ENCODE measurements at regions of chr12 and their contacts with region 1.

Region 1: DNA sequence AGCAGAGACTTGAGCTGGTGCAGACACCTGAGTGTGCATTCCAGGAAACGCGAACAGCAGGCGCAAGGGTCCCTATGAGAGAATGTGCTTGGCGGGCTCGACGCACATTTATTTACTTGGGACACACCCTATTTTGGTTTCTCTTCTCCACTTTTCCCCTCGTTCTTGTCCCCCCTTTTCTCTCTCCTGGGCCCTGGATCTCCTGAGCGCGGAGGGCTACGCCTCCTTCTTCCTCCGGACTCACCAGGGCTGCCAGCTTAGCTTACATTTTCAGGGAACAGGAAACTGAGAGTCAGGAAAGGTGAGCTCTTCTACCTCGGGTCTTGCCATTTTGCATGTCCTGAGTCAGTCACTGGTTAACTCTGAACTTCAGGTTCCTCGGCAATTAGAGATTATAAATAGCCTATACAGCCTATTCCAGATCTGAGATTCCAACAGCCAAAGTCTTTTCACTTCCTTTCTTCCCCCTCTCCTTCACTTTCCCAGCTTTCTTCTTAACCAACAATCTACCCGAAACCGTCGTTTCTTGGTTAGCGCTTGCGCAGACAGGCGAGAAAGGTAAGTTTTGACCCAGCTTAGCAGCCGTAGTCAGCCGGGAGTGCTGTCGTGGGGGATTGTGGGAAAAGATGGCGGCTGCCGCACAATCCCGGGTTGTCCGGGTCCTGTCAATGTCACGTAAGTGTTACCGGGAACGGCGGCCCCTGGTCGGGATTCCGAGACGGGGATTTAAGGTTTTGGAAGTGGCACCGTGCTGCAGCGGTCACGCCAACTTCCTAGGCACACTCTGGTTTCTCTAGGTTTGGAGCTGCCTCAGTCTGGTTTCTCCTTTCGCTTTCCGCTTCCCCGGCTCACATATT is at the starts of genes AKAP3 and NDUFA9:
- DNase-seq: peak; percentile 68 to 83 (median 70)
- ATAC-seq: peak; percentile 96
- H3K4me3 ChIP-seq: peak within 1 kb of the TSS; percentile 67
- H3K27ac ChIP-seq: peak within 1 kb of the TSS; percentile 86
- H3K4me1 ChIP-seq: no peaks in the 10 kb centered on the region; a peak in 2 of 5 replicates
- H3K27me3 ChIP-seq: no peaks in the 10 kb centered on the region
- CTCF ChIP-seq: no peak
- EP300 ChIP-seq: no peak
- POLR2A ChIP-seq: peak; percentile 90
- RAD21 ChIP-seq: no peak
- polyA plus RNA-seq, gene AKAP3: 0.17 to 0.31 TPM
- polyA plus RNA-seq, gene NDUFA9: 330 to 331 TPM

Region 2: GRCh38 chr12:4540638-4541037 is 108.1 kb before region 1 on chr12:
- CTCF ChIA-PET with region 1: no interaction called
- POLR2A ChIA-PET with region 1: no interaction called
- in situ Hi-C with region 1: no loop called
- intact Hi-C with region 1: loop called (anchors 10 kb)
- DNase-seq: no peak
- ATAC-seq: no peak
- H3K4me3 ChIP-seq: peak overlapping the region; percentile 84; the same call in 1 of the 2 replicates
- H3K27ac ChIP-seq: no peak overlapping the region
- H3K4me1 ChIP-seq: peaks cover 0 to 2% of the 10 kb centered on the region in 2 experiments; a peak in 1 of 5 replicates
- H3K27me3 ChIP-seq: no peaks in the 10 kb centered on the region
- CTCF ChIP-seq: no peak
- EP300 ChIP-seq: no peak
- POLR2A ChIP-seq: no peak
- RAD21 ChIP-seq: no peak

Region 3: GRCh38 chr12:4604684-4605193 is 44.0 kb before region 1 on chr12:
- CTCF ChIA-PET with region 1: no interaction called
- POLR2A ChIA-PET with region 1: interaction called, 3 read pairs
- in situ Hi-C with region 1: no loop called
- intact Hi-C with region 1: loop called (anchors 2 kb)
- DNase-seq: peak; percentile 69 to 83 (median 70)
- ATAC-seq: peak; percentile 97
- H3K4me3 ChIP-seq: peak overlapping the region; percentile 53
- H3K27ac ChIP-seq: no peak overlapping the region; the same call in 2 of the 3 replicates
- H3K4me1 ChIP-seq: peaks cover 0 to 4% of the 10 kb centered on the region in 2 experiments; a peak in 2 of 5 replicates
- H3K27me3 ChIP-seq: peaks cover 0 to 3% of the 10 kb centered on the region in 2 experiments; a peak in 2 of 5 replicates
- CTCF ChIP-seq: peak; percentile 75 to 90 (median 75)
- EP300 ChIP-seq: no peak
- POLR2A ChIP-seq: peak; percentile 69
- RAD21 ChIP-seq: peak in 1 of 2 experiments; percentile 56; a peak in 2 of 4 replicates